AG04450 (cell line): ENCODE measurements at regions of chr15 and their contacts with region 1.

Region 1: DNA sequence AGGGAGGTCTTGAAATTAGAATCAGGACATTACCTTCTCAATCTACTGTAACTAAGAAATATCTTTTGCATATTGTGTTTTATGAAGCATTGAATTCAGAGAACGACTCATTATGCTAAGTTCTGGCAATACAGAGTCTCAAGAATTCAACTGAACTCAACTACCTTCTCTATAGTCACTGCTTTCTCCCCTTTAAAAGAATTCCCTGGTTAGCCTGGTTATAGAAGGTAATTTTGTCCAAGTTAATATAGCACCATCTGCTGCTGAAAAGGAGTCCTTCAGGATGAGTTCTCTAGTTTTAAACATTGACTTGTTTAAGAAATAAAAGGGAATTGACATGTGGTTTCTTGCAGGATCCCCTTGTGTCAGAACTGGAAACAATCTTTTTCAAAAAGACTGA is 60.2 kb downstream of the IL16 start:
- DNase-seq: no peak
- H3K4me3 ChIP-seq: no peak overlapping the region
- H3K27ac ChIP-seq: no peak overlapping the region
- H3K27me3 ChIP-seq: no peaks in the 10 kb centered on the region
- CTCF ChIP-seq: peak; percentile 76

Region 2: DNA sequence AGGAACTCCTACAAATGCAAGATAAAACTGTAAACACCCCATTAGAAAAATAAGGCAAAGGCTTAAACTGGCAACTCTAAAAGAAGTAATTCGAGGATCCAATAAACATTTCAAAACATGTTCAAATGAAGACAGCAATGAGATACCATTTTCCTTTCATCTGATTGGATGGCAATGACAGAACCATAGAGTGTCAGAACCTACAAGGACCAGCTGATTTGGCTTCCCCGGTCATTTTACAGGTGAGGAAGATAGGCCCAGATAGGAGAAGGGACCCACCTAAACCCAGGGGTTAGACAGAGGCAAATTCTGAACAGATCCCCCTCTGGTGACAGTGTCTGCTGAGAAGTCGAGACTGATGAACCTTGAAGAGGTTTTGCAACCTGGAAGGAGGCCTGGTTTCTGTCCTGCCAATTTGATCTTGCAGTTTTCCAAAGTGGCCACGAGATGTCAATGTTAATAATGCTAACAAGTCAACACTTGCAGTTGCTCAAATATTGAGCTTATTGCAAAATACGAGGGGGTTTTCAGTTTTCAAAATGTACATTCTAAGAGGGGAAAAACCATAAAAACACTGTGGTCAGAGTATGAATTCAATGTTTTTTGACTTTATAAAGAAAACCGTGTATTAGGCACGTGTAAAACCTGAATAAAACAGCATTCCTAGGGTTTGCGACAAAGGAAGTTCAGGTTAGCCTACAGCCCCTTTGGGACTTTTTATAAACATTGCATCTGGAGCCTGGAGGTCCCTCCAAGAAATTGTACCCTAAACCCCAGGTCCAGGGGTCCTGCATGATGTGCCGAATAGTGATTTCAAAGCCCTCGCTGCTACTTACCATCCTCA is 101.3 kb before region 1 on chr15:
- CTCF ChIA-PET with region 1: interaction called, 96 read pairs
- POLR2A ChIA-PET with region 1: no interaction called
- DNase-seq: peak; percentile 46
- H3K4me3 ChIP-seq: no peak overlapping the region
- H3K27ac ChIP-seq: no peak overlapping the region
- H3K27me3 ChIP-seq: no peaks in the 10 kb centered on the region
- CTCF ChIP-seq: peak; percentile 77

Region 3: DNA sequence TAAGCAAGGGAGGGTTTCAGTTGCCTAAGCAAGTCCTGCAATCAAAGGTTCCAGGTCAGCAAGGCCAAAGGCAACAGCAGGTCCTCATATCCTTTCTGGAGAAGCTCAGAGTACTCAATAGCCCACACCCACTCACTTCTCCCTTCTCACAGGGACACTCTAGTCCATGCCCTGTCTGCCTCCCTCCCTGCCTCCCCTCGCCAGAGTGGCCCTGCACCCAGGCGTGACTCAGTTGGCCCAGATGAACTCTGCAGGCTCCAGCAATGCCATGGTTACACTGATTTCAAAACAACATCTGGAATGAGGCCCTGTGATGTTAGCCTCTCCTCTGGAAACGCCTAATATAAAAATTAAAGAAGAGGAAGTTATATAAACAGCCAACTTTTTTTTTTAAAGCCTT is 27.3 kb before region 1 on chr15:
- CTCF ChIA-PET with region 1: interaction called, 11 read pairs
- POLR2A ChIA-PET with region 1: no interaction called
- DNase-seq: no peak
- H3K4me3 ChIP-seq: no peak overlapping the region
- H3K27ac ChIP-seq: no peak overlapping the region
- H3K27me3 ChIP-seq: no peaks in the 10 kb centered on the region
- CTCF ChIP-seq: no peak